ENCODE measurements at regions of chr9 and their contacts with region 1.

Region 1: DNA sequence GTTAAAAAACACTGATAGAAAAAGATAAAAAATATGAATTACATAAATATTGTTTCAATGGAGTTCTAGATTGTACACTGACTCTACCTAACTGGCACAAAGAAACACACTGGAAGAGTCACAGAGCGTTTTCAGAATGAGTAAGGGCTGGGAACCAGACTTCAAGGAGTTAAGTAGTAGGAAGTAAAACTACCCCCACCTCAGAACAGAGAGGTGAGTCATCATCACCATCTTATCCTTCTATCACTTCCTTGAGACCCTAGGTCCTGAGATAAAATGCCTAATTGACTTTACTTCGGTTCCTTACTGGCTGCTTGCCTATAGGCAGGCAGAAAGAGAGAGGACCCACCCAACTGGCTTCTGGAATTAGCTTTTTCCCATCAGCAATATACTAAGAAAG is 79.7 kb downstream of the ELAVL2 start:
- DNase-seq: no peak
- ATAC-seq: no peak
- H3K4me3 ChIP-seq: no peak overlapping the region
- H3K27ac ChIP-seq: no peak overlapping the region
- H3K4me1 ChIP-seq: no peaks in the 10 kb centered on the region
- H3K27me3 ChIP-seq: no peaks in the 10 kb centered on the region

Region 2: GRCh38 chr9:23731353-23731752 is 15.0 kb before region 1 on chr9:
- intact Hi-C with region 1: loop called in 1 of 2 experiments (anchors 1 kb)
- DNase-seq: no peak
- ATAC-seq: no peak
- H3K4me3 ChIP-seq: no peak overlapping the region
- H3K27ac ChIP-seq: no peak overlapping the region
- H3K4me1 ChIP-seq: no peaks in the 10 kb centered on the region
- H3K27me3 ChIP-seq: no peaks in the 10 kb centered on the region

Measured in aorta (tissue), 5 donors.